Calu3 (cell line): ENCODE measurements at regions of chr15 and their contacts with region 1.

Region 1: DNA sequence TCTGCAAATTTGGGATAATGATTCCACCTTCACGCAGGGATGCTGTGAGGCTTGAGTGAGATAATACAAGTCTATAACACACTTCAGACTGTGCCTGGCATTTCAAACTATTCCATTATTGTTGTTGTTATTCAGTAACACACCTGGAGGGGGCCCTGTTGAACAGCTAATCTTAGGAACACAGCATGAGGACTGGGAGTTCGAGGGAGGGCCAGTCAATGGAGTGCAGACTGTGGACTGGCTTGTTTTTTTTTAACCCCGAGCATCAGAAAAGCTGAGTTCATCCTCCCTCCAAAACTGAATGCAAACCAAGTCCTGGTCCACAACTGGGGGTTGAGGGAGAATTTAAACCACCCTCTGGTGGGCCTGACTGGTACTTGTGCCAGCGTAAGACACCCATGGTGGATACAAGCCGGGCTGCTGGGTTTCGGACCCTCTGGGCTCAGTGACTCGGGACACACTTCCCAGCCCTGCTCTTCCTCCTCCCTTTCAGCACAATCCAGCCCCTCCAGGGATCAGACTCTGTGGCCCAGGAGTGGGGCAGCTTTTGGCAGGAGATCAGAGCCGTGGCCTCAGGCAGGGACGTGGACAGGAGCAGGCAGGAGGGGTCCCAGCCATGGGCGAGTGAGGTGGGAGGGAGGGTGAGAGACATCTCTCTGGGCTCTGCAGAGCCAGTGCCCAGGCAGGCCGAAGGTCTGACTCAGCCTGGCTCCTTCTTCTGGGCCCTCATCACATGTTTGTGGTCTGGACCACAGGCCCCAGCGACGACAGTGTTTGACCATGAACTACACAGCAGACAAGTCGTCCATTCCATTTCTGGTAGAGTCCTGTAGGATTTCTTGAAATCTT is 36.3 kb upstream of the MEX3B start:
- DNase-seq: no peak
- H3K4me3 Mint-ChIP-seq: no peak overlapping the region
- H3K27ac Mint-ChIP-seq: no peak overlapping the region
- H3K4me1 Mint-ChIP-seq: no peaks in the 10 kb centered on the region
- H3K27me3 Mint-ChIP-seq: peaks cover 84% of the 10 kb centered on the region
- CTCF ChIP-seq: peak; percentile 17

Region 2: DNA sequence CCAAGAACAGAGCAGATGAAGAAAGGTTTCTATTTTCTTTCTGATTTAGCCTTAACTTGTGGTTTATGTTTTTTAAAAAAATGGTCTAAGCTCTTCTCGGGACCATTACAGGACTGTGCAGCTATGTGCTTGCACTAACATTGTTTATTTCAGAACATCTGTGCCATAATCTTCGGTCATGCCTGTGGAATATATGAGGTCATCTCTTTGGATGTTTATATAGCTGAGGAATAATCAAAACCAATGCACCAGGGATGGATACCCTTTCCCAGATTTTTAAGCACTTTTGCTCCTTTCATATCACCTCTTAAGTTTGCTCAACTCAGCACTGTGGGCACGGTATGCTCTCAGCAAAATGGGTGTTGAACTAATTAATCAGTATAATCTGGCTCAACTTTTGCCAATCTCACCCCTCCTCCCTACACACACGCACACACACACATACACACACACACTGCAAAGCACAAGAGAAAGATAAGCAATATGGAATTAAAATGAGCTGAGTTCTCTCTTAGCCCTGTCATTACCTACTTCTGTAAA is 439.6 kb before region 1 on chr15:
- CTCF ChIA-PET with region 1: no interaction called
- intact Hi-C with region 1: no loop called
- DNase-seq: no peak
- H3K4me3 Mint-ChIP-seq: no peak overlapping the region
- H3K27ac Mint-ChIP-seq: no peak overlapping the region
- H3K4me1 Mint-ChIP-seq: no peaks in the 10 kb centered on the region
- H3K27me3 Mint-ChIP-seq: no peaks in the 10 kb centered on the region
- CTCF ChIP-seq: no peak

Region 3: GRCh38 chr15:82046666-82047452 is 35.3 kb before region 1 on chr15:
- CTCF ChIA-PET with region 1: interaction called, 14 read pairs
- intact Hi-C with region 1: no loop called
- DNase-seq: peak; percentile 97
- H3K4me3 Mint-ChIP-seq: peak overlapping the region; percentile 92
- H3K27ac Mint-ChIP-seq: peak overlapping the region; percentile 50
- H3K4me1 Mint-ChIP-seq: peaks cover 13% of the 10 kb centered on the region
- H3K27me3 Mint-ChIP-seq: peaks cover 46% of the 10 kb centered on the region
- CTCF ChIP-seq: peak; percentile 71

Region 4: DNA sequence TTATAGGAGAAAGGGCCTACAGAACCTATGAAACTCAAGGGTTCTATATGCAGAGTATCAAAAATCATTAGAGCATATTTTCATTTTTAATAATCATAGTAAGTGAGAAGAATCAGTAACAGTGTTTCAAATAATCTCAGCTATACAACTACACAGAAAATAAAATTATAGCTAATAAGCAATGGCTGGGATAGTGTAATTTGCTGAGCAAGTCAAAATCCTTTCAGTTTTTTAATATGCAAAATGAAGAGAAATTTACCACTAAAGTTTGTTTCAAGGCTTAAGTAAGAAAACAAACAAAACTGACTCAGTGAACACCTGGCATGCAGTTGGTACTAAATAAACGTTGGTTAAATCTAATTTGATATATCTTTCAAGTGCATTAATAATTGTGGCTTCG is 114.2 kb after region 1 on chr15:
- CTCF ChIA-PET with region 1: no interaction called
- intact Hi-C with region 1: no loop called
- DNase-seq: no peak
- H3K4me3 Mint-ChIP-seq: no peak overlapping the region
- H3K27ac Mint-ChIP-seq: no peak overlapping the region
- H3K4me1 Mint-ChIP-seq: peaks cover 6% of the 10 kb centered on the region
- H3K27me3 Mint-ChIP-seq: no peaks in the 10 kb centered on the region
- CTCF ChIP-seq: no peak